ENCODE measurements at regions of chr9 and their contacts with region 1.

Region 1: DNA sequence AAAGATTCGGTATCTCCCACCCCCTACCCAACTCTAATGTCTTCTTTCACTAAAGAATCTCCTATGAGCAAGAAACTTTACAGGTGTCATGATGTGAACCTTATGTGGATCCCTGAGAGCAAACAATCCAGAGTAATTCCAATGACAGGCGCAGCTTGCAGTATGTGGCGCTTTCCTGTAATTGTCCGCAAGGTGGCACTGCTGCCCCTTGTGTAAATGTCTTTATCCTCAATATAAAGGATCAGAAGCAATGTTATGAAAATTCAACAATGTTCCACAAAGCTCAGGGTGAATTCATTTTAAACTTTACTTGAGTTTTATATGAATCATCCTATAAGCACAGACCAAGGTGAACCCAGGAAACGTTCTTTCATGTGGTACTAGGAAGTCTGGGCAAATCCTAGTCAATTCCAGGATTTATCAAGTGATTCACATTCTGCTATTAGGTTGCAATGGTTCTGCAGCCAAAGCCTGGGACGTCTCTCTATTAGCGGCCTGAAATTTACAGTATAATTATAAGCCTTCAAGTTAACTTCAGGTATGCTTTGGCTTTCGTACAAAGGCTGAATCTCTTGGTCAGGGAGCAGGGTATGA is 113.7 kb downstream of the TRPM6 start:
- DNase-seq: peak; percentile 76
- H3K4me3 ChIP-seq: no peak overlapping the region
- H3K27ac ChIP-seq: no peak overlapping the region
- H3K4me1 ChIP-seq: no peaks in the 10 kb centered on the region
- H3K27me3 ChIP-seq: peaks cover 3 to 4% of the 10 kb centered on the region in 2 experiments
- CTCF ChIP-seq: peak; percentile 71 to 92
- POLR2A ChIP-seq: no peak

Region 2: GRCh38 chr9:73200694-73201452 is 1573.1 kb before region 1 on chr9:
- CTCF ChIA-PET with region 1: interaction called, 11 read pairs
- POLR2A ChIA-PET with region 1: no interaction called
- dilution Hi-C with region 1: no loop called
- intact Hi-C with region 1: no loop called
- DNase-seq: peak; percentile 39
- H3K4me3 ChIP-seq: no peak overlapping the region
- H3K27ac ChIP-seq: no peak overlapping the region
- H3K4me1 ChIP-seq: no peaks in the 10 kb centered on the region
- H3K27me3 ChIP-seq: peaks cover 4 to 10% of the 10 kb centered on the region in 2 experiments
- CTCF ChIP-seq: peak; percentile 37 to 40
- POLR2A ChIP-seq: no peak

Region 3: DNA sequence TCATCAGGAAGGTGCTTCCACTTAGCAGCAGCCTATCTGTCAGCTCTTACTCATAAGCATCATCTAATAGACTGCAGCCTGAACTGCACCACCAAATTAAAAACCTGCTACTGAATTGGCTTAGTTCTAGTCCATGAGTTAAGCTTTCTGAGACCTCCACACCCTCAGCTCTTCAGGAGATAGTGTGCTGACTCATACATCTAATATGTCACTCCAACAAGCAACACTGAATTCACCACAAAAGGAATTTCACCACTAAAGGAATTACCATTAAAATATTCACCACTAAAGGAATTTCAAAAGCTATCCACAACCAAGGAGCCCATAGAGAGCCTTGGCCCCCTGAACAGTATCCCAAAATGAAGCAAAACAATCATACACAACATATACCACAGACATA is 695.3 kb before region 1 on chr9:
- CTCF ChIA-PET with region 1: no interaction called
- POLR2A ChIA-PET with region 1: no interaction called
- dilution Hi-C with region 1: no loop called
- intact Hi-C with region 1: no loop called
- DNase-seq: no peak
- H3K4me3 ChIP-seq: no peak overlapping the region
- H3K27ac ChIP-seq: no peak overlapping the region
- H3K4me1 ChIP-seq: no peaks in the 10 kb centered on the region
- H3K27me3 ChIP-seq: no peaks in the 10 kb centered on the region
- CTCF ChIP-seq: no peak
- POLR2A ChIP-seq: no peak

Region 4: GRCh38 chr9:75001719-75002422 is 227.9 kb after region 1 on chr9:
- CTCF ChIA-PET with region 1: interaction called, 127 read pairs
- POLR2A ChIA-PET with region 1: no interaction called
- dilution Hi-C with region 1: no loop called
- intact Hi-C with region 1: loop called (anchors 1 kb)
- DNase-seq: peak; percentile 82
- H3K4me3 ChIP-seq: no peak overlapping the region
- H3K27ac ChIP-seq: peak overlapping the region; percentile 18
- H3K4me1 ChIP-seq: peaks cover 2% of the 10 kb centered on the region
- H3K27me3 ChIP-seq: no peaks in the 10 kb centered on the region
- CTCF ChIP-seq: peak; percentile 53 to 56
- POLR2A ChIP-seq: no peak

Region 5: DNA sequence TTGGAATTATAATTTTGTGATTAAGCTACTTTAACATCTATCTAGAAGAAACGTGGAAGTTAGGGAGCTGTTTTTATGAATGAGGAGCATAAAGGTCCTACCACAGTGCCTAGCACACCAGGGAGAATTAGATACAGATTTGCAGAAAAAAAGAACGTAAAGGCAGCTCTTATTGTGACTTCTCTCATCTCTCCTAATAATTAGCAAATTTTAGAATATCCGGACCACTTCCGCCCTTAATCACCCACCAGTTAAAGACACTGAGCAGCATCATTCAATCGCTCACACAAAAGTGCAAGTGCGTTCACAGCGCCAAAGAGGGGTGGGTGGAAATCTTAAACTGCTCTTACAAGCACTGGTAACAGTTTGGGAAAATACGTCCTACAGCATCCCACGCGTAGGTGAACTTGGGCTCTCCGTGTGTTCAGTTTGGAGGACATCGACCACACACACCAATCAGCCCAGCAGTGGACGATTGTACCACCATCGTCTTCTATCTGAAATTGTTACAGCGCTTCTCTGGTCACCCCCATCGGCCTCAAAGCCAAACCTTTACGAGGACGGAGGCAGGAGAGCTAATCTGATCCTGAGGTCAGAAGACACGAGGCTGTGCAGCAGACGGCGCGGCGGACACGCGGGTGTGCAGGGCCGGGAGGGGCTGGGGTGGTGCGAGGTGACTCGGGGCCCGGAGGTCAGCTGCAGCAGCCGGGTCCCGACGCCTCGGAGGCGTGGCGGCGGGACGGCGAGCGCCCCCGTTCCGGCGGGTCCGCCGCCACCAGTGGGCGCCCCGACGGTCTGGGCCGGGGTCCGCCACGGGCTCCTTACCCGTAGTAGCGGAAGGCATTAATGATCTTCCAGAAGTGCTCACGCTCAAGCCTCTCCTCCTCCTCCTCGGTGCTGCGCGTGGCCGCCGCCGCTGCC is 253.5 kb after region 1 on chr9:
- CTCF ChIA-PET with region 1: interaction called, 13 read pairs
- POLR2A ChIA-PET with region 1: no interaction called
- dilution Hi-C with region 1: no loop called
- intact Hi-C with region 1: no loop called
- DNase-seq: peak; percentile 53
- H3K4me3 ChIP-seq: peak overlapping the region; percentile 15 to 68 (median 61)
- H3K27ac ChIP-seq: peak overlapping the region; percentile 43
- H3K4me1 ChIP-seq: peaks cover 9% of the 10 kb centered on the region
- H3K27me3 ChIP-seq: peaks cover 1 to 2% of the 10 kb centered on the region in 2 experiments
- CTCF ChIP-seq: peak in 1 of 2 donors; percentile 21
- POLR2A ChIP-seq: peak; percentile 10

Region 6: GRCh38 chr9:75071530-75072124 is 297.6 kb after region 1 on chr9:
- CTCF ChIA-PET with region 1: interaction called, 93 read pairs
- POLR2A ChIA-PET with region 1: no interaction called
- dilution Hi-C with region 1: loop called (anchors 25 kb)
- intact Hi-C with region 1: no loop called
- DNase-seq: no peak
- H3K4me3 ChIP-seq: no peak overlapping the region
- H3K27ac ChIP-seq: no peak overlapping the region
- H3K4me1 ChIP-seq: no peaks in the 10 kb centered on the region
- H3K27me3 ChIP-seq: no peaks in the 10 kb centered on the region
- CTCF ChIP-seq: no peak
- POLR2A ChIP-seq: no peak

Region 7: GRCh38 chr9:75238311-75238978 is 464.5 kb after region 1 on chr9:
- CTCF ChIA-PET with region 1: interaction called, 29 read pairs
- POLR2A ChIA-PET with region 1: no interaction called
- dilution Hi-C with region 1: no loop called
- intact Hi-C with region 1: loop called (anchors 1 kb)
- DNase-seq: peak; percentile 71
- H3K4me3 ChIP-seq: no peak overlapping the region
- H3K27ac ChIP-seq: no peak overlapping the region
- H3K4me1 ChIP-seq: no peaks in the 10 kb centered on the region
- H3K27me3 ChIP-seq: peaks cover 0 to 3% of the 10 kb centered on the region in 2 experiments
- CTCF ChIP-seq: peak; percentile 54 to 57
- POLR2A ChIP-seq: no peak